HepG2 (cell line): ENCODE measurements at regions of chr2 and their contacts with region 1.

Region 1: GRCh38 chr2:212330263-212330662 is 208.3 kb downstream of the ERBB4 start:
- DNase-seq: no peak
- ATAC-seq: no peak
- H3K4me3 ChIP-seq: no peak overlapping the region
- H3K27ac ChIP-seq: no peak overlapping the region
- H3K4me1 ChIP-seq: peaks cover 12% of the 10 kb centered on the region
- H3K27me3 ChIP-seq: no peaks in the 10 kb centered on the region
- CTCF ChIP-seq: no peak
- EP300 ChIP-seq: no peak
- POLR2A ChIP-seq: no peak
- RAD21 ChIP-seq: no peak

Region 2: DNA sequence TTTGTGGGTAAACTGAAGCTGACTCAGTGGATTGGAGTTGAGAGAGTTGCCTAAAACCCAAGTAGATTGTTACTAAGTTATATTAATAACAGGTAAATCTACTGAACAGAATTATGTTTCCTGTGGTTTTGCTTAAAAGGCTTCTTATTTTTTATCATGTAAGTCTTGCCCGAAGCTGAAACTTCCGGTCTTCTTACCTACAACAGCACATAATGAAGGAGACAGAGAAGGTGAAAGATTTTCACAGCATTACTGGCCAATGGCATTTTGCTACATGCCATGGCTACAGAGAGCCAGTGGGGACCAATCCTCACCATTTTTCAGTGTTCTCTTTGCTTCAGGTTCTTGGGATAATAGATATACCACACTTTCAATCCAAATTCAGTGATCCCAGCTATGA is 11.6 kb before region 1 on chr2:
- CTCF ChIA-PET with region 1: no interaction called
- POLR2A ChIA-PET with region 1: no interaction called
- in situ Hi-C with region 1: no loop called
- intact Hi-C with region 1: loop called (anchors 1 kb)
- DNase-seq: no peak
- ATAC-seq: no peak
- H3K4me3 ChIP-seq: no peak overlapping the region
- H3K27ac ChIP-seq: no peak overlapping the region
- H3K4me1 ChIP-seq: no peaks in the 10 kb centered on the region
- H3K27me3 ChIP-seq: no peaks in the 10 kb centered on the region
- CTCF ChIP-seq: no peak
- EP300 ChIP-seq: no peak
- POLR2A ChIP-seq: no peak
- RAD21 ChIP-seq: no peak